SK-N-SH (cell line): ENCODE measurements at regions of chr19 and their contacts with region 1.

Region 1: GRCh38 chr19:17932485-17933338 is at the start of gene CCDC124:
- DNase-seq: peak; percentile 95
- H3K4me3 ChIP-seq: peak within 1 kb of the TSS; percentile 71 to 85
- H3K27ac ChIP-seq: peak within 1 kb of the TSS; percentile 80 to 86
- H3K4me1 ChIP-seq: peaks cover 0 to 10% of the 10 kb centered on the region in 2 experiments; a peak in 1 of 4 replicates
- H3K27me3 ChIP-seq: no peaks in the 10 kb centered on the region
- CTCF ChIP-seq: peak; percentile 93
- EP300 ChIP-seq: no peak
- RAD21 ChIP-seq: peak; percentile 83
- polyA plus RNA-seq, gene CCDC124: 157 and 231 TPM in 2 replicates

Region 2: DNA sequence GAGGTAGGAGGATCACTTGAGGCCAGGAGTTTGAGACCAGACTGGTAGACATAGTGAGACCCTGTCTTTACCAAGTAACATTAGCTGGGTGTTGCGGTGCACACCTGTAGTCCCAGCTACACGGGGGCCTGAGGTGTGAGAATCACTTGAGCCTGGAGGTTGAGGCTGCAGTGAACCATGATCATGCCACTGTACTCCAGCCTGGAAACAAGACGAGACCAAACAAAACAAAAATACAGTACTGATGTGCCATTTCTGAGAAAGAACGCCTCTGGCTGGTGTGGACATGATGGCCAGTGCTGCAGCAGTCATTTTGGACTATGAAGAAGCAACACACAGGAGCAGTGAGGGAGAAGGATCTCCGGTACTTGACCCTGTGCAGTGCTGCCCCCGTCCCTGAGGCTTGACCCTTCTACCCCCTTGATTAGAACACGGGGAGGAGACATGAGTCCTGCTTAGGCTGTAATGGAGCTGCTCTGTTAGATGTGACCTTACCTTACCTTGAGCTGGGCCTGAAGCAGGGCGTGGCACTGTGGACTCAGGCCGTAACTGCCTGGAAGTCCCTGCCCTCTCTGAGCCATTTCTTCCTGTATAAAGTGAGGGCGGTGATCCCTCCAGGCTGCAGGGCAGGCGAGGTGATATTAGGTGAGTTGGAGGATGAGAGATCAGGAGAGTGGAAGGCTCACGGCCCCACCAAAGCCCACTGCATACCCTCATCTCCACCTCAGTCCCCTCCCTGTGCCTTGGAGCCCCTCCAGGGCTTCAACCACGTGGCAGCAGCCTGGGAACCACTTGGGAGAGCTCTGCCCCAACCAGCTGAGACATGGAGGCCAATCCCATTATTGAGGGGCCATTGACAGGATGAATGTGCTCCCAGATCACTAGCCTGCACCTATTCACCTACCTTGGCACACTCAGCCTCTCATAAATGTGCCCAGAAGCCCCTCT is 67.1 kb before region 1 on chr19:
- CTCF ChIA-PET with region 1: interaction called, 139 read pairs
- POLR2A ChIA-PET with region 1: interaction called, 27 read pairs
- DNase-seq: peak; percentile 32
- H3K4me3 ChIP-seq: no peak overlapping the region
- H3K27ac ChIP-seq: no peak overlapping the region
- H3K4me1 ChIP-seq: peaks cover 0 to 16% of the 10 kb centered on the region in 2 experiments; a peak in 1 of 4 replicates
- H3K27me3 ChIP-seq: no peaks in the 10 kb centered on the region
- CTCF ChIP-seq: no peak
- EP300 ChIP-seq: no peak
- RAD21 ChIP-seq: no peak

Region 3: DNA sequence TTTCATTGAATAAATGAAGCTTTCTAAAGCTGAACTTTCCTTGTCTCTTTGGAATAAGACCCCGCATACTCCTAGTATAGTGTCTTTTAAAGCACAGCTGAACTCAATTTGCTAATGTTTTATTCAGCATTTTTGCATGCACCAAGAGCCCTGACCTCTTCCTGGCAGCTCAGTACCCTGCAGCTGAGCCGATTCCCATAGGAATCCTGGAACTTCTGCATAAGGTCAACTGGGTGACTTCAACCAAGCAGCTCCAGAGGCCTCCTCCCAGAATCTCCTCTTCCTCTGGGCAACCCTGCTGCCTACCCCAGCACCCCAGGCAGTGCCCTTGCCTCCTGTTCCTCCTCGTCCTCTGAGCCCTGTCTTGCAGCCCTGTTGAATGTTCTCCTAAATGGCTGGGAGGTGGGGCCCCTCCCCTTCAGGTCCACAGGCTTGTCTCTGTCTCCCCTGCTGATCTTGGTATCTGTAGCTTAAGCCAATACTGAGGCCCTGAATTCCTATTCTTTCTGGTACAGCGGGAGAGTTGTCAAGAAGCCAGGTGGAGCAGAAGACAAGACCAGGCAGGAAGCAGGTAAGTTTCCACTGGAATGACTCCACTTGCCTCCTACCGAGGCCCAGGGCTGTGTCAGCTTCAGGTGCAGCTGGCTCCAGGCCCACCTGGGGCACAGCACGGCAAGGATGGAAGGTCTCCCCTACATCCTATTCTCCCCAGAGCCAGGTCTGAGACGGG is 23.5 kb before region 1 on chr19:
- CTCF ChIA-PET with region 1: interaction called, 13 read pairs
- POLR2A ChIA-PET with region 1: no interaction called
- DNase-seq: no peak
- H3K4me3 ChIP-seq: no peak overlapping the region
- H3K27ac ChIP-seq: no peak overlapping the region
- H3K4me1 ChIP-seq: no peaks in the 10 kb centered on the region
- H3K27me3 ChIP-seq: no peaks in the 10 kb centered on the region
- CTCF ChIP-seq: no peak
- EP300 ChIP-seq: no peak
- RAD21 ChIP-seq: no peak

Region 4: GRCh38 chr19:17947815-17948513 is 15.3 kb after region 1 on chr19:
- CTCF ChIA-PET with region 1: interaction called, 69 read pairs
- POLR2A ChIA-PET with region 1: no interaction called
- DNase-seq: peak; percentile 99
- H3K4me3 ChIP-seq: peak overlapping the region; percentile 49 to 59
- H3K27ac ChIP-seq: no peak overlapping the region; a peak in 1 of 4 replicates
- H3K4me1 ChIP-seq: peaks cover 11 to 22% of the 10 kb centered on the region in 2 experiments; a peak in 2 of 4 replicates
- H3K27me3 ChIP-seq: peaks cover 30% of the 10 kb centered on the region
- CTCF ChIP-seq: no peak
- EP300 ChIP-seq: 0 out of 4 replicates have a peak, but pooled peaks of 1 of the 2 experiments have one; percentile 13
- RAD21 ChIP-seq: no peak

Region 5: GRCh38 chr19:18007044-18007916 is 74.6 kb after region 1 on chr19:
- CTCF ChIA-PET with region 1: interaction called, 464 read pairs
- POLR2A ChIA-PET with region 1: no interaction called
- DNase-seq: peak; percentile 92
- H3K4me3 ChIP-seq: peak overlapping the region; percentile 47 to 73
- H3K27ac ChIP-seq: peak overlapping the region in 1 of 2 experiments; percentile 42; a peak in 2 of 4 replicates
- H3K4me1 ChIP-seq: peaks cover 6 to 13% of the 10 kb centered on the region in 2 experiments; a peak in 2 of 4 replicates
- H3K27me3 ChIP-seq: no peaks in the 10 kb centered on the region
- CTCF ChIP-seq: peak; percentile 88
- EP300 ChIP-seq: no peak
- RAD21 ChIP-seq: peak; percentile 98